H1 (cell line): ENCODE measurements at regions of chr11 and their contacts with region 1.

Region 1: GRCh38 chr11:35822815-35823495 is 120.9 kb upstream of the LDLRAD3 start:
- DNase-seq: no peak
- H3K4me3 ChIP-seq: no peak overlapping the region
- H3K27ac ChIP-seq: no peak overlapping the region
- H3K4me1 ChIP-seq: peaks cover 0 to 2% (median 0%) of the 10 kb centered on the region in 4 experiments; a peak in 1 of 7 replicates
- H3K27me3 ChIP-seq: peaks cover 0 to 2% (median 0%) of the 10 kb centered on the region in 4 experiments; a peak in 1 of 7 replicates
- CTCF ChIP-seq: no peak
- EP300 ChIP-seq: no peak
- POLR2A ChIP-seq: no peak
- RAD21 ChIP-seq: no peak

Region 2: GRCh38 chr11:35617687-35618496 is 205.1 kb before region 1 on chr11 and contains the start of gene FJX1:
- CTCF ChIA-PET with region 1: interaction called, 25 read pairs
- POLR2A ChIA-PET with region 1: interaction called, 3 read pairs
- DNase-seq: peak; percentile 44 to 86
- H3K4me3 ChIP-seq: peak within 1 kb of the TSS; percentile 55 to 76 (median 72)
- H3K27ac ChIP-seq: no peak within 1 kb of the TSS
- H3K4me1 ChIP-seq: peaks cover 3 to 19% (median 6%) of the 10 kb centered on the region in 4 experiments; a peak in 5 of 7 replicates
- H3K27me3 ChIP-seq: peaks cover 7 to 29% (median 22%) of the 10 kb centered on the region in 4 experiments
- CTCF ChIP-seq: no peak
- EP300 ChIP-seq: no peak
- POLR2A ChIP-seq: no peak
- RAD21 ChIP-seq: no peak
- total RNA-seq, gene FJX1: 13.3 and 14.2 TPM in 2 replicates

Region 3: GRCh38 chr11:35862666-35863065 is 39.7 kb after region 1 on chr11:
- CTCF ChIA-PET with region 1: interaction called, 17 read pairs
- POLR2A ChIA-PET with region 1: no interaction called
- DNase-seq: no peak
- H3K4me3 ChIP-seq: no peak overlapping the region
- H3K27ac ChIP-seq: no peak overlapping the region
- H3K4me1 ChIP-seq: no peaks in the 10 kb centered on the region
- H3K27me3 ChIP-seq: no peaks in the 10 kb centered on the region
- CTCF ChIP-seq: no peak
- EP300 ChIP-seq: no peak
- POLR2A ChIP-seq: no peak
- RAD21 ChIP-seq: no peak

Region 4: GRCh38 chr11:35974882-35975589 is 152.1 kb after region 1 on chr11:
- CTCF ChIA-PET with region 1: interaction called, 15 read pairs
- POLR2A ChIA-PET with region 1: no interaction called
- DNase-seq: no peak
- H3K4me3 ChIP-seq: no peak overlapping the region
- H3K27ac ChIP-seq: no peak overlapping the region
- H3K4me1 ChIP-seq: peaks cover 6 to 21% (median 11%) of the 10 kb centered on the region in 4 experiments
- H3K27me3 ChIP-seq: no peaks in the 10 kb centered on the region
- CTCF ChIP-seq: no peak
- EP300 ChIP-seq: no peak
- POLR2A ChIP-seq: no peak
- RAD21 ChIP-seq: no peak

Region 5: GRCh38 chr11:36048496-36049247 is 225.7 kb after region 1 on chr11:
- CTCF ChIA-PET with region 1: interaction called, 23 read pairs
- POLR2A ChIA-PET with region 1: no interaction called
- DNase-seq: no peak
- H3K4me3 ChIP-seq: no peak overlapping the region
- H3K27ac ChIP-seq: no peak overlapping the region
- H3K4me1 ChIP-seq: peaks cover 0 to 12% (median 11%) of the 10 kb centered on the region in 4 experiments; a peak in 3 of 7 replicates
- H3K27me3 ChIP-seq: no peaks in the 10 kb centered on the region
- CTCF ChIP-seq: no peak
- EP300 ChIP-seq: no peak
- POLR2A ChIP-seq: no peak
- RAD21 ChIP-seq: no peak

Region 6: GRCh38 chr11:36123346-36124101 is 300.6 kb after region 1 on chr11:
- CTCF ChIA-PET with region 1: interaction called, 11 read pairs
- POLR2A ChIA-PET with region 1: no interaction called
- DNase-seq: no peak
- H3K4me3 ChIP-seq: no peak overlapping the region
- H3K27ac ChIP-seq: no peak overlapping the region
- H3K4me1 ChIP-seq: peaks cover 3 to 12% (median 8%) of the 10 kb centered on the region in 4 experiments; a peak in 5 of 7 replicates
- H3K27me3 ChIP-seq: no peaks in the 10 kb centered on the region
- CTCF ChIP-seq: no peak
- EP300 ChIP-seq: no peak
- POLR2A ChIP-seq: no peak
- RAD21 ChIP-seq: no peak

Region 7: DNA sequence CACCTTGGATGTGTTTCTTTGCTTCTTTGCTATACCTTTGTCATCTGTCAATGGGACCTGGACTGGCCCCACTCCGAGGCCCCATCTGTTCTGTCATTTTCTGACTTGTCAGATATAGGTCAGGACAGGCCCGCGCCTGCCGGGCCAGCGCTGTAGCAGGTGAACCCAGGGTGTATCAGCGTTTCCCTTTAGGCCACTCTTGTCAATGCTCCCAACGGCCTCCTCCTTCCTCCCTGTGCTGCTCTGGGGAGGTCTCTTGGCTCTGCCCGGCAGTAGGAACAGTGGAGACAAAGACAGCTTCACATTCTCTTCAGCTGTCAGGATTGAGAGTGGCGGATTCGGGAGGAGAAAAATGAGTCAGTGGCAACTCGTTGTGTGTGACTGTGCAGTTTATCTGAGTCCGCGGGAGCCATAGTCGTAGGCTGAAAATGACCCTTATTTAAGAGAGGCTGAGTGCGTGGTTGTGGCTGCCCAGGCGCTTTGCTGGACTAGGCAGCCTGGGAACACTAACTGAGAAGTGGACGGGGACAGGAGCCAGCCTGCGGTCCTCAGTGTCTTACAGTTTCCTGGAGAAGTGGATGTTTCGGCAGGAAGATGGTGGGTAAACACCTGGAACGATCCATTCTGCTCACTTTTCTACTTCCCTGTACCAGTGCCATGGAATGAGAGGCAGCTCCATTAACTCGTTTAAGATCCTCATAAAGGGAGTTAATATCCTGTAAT is 575.4 kb after region 1 on chr11:
- CTCF ChIA-PET with region 1: no interaction called
- POLR2A ChIA-PET with region 1: no interaction called
- DNase-seq: no peak
- H3K4me3 ChIP-seq: no peak overlapping the region
- H3K27ac ChIP-seq: no peak overlapping the region
- H3K4me1 ChIP-seq: no peaks in the 10 kb centered on the region
- H3K27me3 ChIP-seq: no peaks in the 10 kb centered on the region
- CTCF ChIP-seq: no peak
- EP300 ChIP-seq: no peak
- POLR2A ChIP-seq: no peak
- RAD21 ChIP-seq: no peak